Naive thymus-derived CD4-positive, alpha-beta T cell (primary cell): ENCODE measurements at regions of chr3 and their contacts with region 1.

Region 1: DNA sequence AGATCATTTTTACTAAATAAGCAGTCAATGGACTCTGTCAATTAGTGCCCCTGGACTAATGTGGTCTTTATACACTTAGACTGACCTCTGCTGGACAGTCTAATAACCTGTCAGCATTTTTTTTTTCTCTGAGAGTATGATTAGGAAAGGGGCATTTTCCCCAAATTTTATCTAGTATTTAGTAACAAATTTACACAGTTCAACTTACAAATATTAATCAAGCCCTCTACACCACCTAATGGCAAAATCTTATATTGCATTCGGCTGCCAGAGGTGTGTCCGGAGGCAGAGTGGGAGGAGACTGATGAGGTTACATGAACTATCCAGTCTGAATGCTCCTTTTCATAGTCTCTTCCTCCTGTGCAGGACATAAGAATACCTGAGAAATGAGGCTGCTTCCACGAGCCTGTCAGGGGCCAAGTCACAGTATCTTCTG is 36.0 kb upstream of the COLQ start:
- DNase-seq: peak; percentile 13 to 73 (median 62)
- ATAC-seq: peak; percentile 92
- H3K4me3 ChIP-seq: no peak overlapping the region
- H3K4me3 Mint-ChIP-seq: peak overlapping the region in 1 of 10 donors; percentile 0
- H3K27ac ChIP-seq: no peak overlapping the region
- H3K27ac Mint-ChIP-seq: peak overlapping the region in 2 of 9 donors; percentile 19 to 64
- H3K4me1 ChIP-seq: peaks cover 0 to 15% of the 10 kb centered on the region in 2 donors
- H3K4me1 Mint-ChIP-seq: peaks cover 0 to 35% (median 11%) of the 10 kb centered on the region in 7 donors
- H3K27me3 ChIP-seq: no peaks in the 10 kb centered on the region
- H3K27me3 Mint-ChIP-seq: no peaks in the 10 kb centered on the region

Region 2: GRCh38 chr3:14740983-14741382 is 816.5 kb before region 1 on chr3:
- CTCF ChIA-PET with region 1: no interaction called
- POLR2A ChIA-PET with region 1: no interaction called
- intact Hi-C with region 1: loop called in 1 of 2 experiments (anchors 5 kb)
- DNase-seq: no peak
- ATAC-seq: no peak
- H3K4me3 ChIP-seq: no peak overlapping the region
- H3K4me3 Mint-ChIP-seq: no peak overlapping the region
- H3K27ac ChIP-seq: no peak overlapping the region
- H3K27ac Mint-ChIP-seq: no peak overlapping the region
- H3K4me1 ChIP-seq: no peaks in the 10 kb centered on the region
- H3K4me1 Mint-ChIP-seq: no peaks in the 10 kb centered on the region
- H3K27me3 ChIP-seq: no peaks in the 10 kb centered on the region
- H3K27me3 Mint-ChIP-seq: peaks cover 9 to 41% (median 21%) of the 10 kb centered on the region in 5 donors

Region 3: DNA sequence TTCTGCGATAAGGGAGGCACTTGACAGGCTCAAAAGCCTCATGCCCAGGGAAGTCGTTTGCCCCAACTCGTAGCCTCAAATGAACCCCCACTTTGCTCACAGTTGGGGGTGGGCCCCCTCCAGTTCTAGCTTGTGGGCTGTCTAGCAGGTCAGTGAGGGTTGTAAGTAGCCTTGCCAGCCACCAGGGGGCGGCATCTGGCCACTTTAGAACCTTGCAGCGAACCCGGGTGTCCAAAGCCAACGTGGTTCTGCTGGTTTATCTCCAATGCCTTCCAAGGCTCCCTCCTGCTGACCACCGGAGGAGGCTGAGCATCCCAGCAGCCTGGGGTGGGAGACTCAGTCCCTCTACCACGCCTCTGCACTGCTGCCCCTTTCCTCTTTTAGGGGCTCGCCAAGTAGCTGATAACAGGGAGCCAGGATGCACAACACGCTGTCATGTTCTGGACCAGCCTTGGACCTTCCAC is 449.4 kb before region 1 on chr3:
- CTCF ChIA-PET with region 1: no interaction called
- POLR2A ChIA-PET with region 1: no interaction called
- intact Hi-C with region 1: loop called (anchors 5 to 10 kb)
- DNase-seq: peak; percentile 51 to 78 (median 63)
- ATAC-seq: peak; percentile 97
- H3K4me3 ChIP-seq: no peak overlapping the region
- H3K4me3 Mint-ChIP-seq: peak overlapping the region in 1 of 10 donors; percentile 29
- H3K27ac ChIP-seq: no peak overlapping the region
- H3K27ac Mint-ChIP-seq: peak overlapping the region in 2 of 9 donors; percentile 31 to 38
- H3K4me1 ChIP-seq: peaks cover 3 to 5% of the 10 kb centered on the region in 2 donors
- H3K4me1 Mint-ChIP-seq: peaks cover 3 to 9% (median 6%) of the 10 kb centered on the region in 7 donors
- H3K27me3 ChIP-seq: no peaks in the 10 kb centered on the region
- H3K27me3 Mint-ChIP-seq: peaks cover 4 to 17% (median 5%) of the 10 kb centered on the region in 5 donors

Region 4: DNA sequence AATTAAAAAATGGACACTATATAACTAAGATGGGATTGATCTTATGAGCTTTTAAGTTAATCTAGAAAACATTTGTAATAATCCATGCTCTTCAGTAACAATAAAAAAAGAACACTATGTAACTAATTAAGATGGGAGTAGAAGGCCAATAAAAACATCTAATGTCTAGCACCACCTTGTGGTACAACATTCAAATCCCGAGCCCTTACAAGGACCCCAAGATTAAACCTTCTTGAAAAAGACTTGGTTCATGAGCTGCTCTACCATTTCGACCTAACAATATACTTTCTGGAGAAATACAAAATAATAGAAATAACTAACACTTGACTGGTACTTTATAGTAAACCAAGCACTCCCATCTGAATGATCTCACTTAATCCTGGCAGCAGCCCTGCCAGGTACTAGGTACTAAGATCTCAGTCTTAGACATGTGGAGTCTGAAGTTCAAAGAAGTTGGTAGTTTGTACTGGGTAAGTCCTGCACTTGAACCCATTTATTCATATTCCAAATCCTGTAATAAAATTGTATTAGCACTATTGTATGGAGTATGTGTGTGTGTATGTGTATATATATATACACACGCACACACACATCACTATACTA is 152.0 kb before region 1 on chr3:
- CTCF ChIA-PET with region 1: no interaction called
- POLR2A ChIA-PET with region 1: no interaction called
- intact Hi-C with region 1: loop called (anchors 1 to 5 kb)
- DNase-seq: peak in 7 of 9 donors; percentile 28 to 63 (median 49)
- ATAC-seq: peak; percentile 75
- H3K4me3 ChIP-seq: no peak overlapping the region
- H3K4me3 Mint-ChIP-seq: no peak overlapping the region
- H3K27ac ChIP-seq: no peak overlapping the region
- H3K27ac Mint-ChIP-seq: no peak overlapping the region
- H3K4me1 ChIP-seq: peaks cover 0 to under 1% of the 10 kb centered on the region in 2 donors
- H3K4me1 Mint-ChIP-seq: peaks cover 0 to 7% (median 1%) of the 10 kb centered on the region in 7 donors
- H3K27me3 ChIP-seq: no peaks in the 10 kb centered on the region
- H3K27me3 Mint-ChIP-seq: no peaks in the 10 kb centered on the region

Region 5: DNA sequence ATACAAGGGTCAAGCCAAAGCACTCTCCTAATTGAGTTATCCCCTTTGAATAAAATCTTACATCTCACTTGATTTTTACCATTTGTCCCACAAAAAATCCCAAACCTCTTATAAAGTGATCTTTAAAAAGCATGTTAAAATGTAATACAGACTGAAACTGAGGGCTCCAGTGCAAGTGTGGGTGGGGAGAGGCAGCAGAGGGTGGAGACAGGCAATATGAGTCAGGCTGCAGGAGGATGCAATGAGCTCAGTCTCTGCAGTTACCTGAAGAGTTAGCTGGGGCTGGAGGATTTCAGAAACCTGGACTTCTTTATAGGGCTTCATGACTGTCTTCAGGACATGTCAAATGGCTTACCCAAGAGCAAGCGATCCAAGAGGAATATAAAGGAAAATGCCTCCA is 21.8 kb before region 1 on chr3:
- CTCF ChIA-PET with region 1: no interaction called
- POLR2A ChIA-PET with region 1: no interaction called
- intact Hi-C with region 1: loop called in 1 of 2 experiments (anchors 1 kb)
- DNase-seq: peak in 2 of 9 donors; percentile 5 to 55
- ATAC-seq: no peak
- H3K4me3 ChIP-seq: no peak overlapping the region
- H3K4me3 Mint-ChIP-seq: peak overlapping the region in 9 of 10 donors; percentile 14 to 76 (median 65)
- H3K27ac ChIP-seq: no peak overlapping the region
- H3K27ac Mint-ChIP-seq: peak overlapping the region; percentile 6 to 89 (median 78)
- H3K4me1 ChIP-seq: peaks cover 32 to 34% of the 10 kb centered on the region in 2 donors
- H3K4me1 Mint-ChIP-seq: peaks cover 27 to 59% (median 44%) of the 10 kb centered on the region in 7 donors
- H3K27me3 ChIP-seq: no peaks in the 10 kb centered on the region
- H3K27me3 Mint-ChIP-seq: no peaks in the 10 kb centered on the region